ENCODE measurements at regions of chr10 and their contacts with region 1.

Region 1: DNA sequence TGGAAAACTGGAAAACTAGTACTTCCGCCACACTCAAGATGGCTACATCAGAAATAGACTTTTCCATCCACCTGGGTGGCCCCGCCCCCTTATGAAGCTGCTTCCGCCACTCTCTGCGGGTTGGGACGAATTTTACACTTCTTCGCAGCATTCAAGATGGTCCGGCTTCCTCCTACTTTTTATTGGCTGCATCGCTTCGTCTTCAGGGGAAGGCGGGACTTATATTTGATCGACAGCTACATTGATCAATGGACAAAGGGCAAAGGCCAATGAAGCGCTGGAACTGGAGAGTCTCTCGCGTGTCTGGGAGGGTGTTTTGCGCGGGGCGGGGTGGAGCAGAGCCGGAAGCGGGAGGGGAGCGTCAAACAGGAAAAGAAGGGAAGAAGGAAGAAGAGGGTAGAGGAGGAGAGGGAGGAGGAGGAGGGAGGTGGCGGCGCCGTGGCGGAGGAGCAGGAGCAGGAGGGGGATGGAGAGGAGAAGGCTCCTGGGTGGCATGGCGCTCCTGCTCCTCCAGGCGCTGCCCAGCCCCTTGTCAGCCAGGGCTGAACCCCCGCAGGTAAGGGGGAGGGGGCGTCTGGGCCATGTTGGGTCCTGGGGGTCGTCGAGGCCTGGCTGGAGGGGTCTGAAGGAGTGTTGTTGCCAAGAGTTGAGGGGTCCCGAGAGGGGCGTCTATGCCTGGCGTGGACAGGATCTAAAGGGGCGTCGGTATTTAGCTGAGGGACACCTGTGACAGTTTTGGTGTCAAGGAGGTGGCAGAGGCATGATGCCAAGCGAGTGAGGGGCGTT is at the start of gene WBP1L:
- DNase-seq: peak; percentile 98
- ATAC-seq: peak; percentile 95
- H3K4me3 ChIP-seq: peak within 1 kb of the TSS; percentile 70 to 96 (median 89)
- H3K4me3 Mint-ChIP-seq: peak within 1 kb of the TSS; percentile 89
- H3K27ac ChIP-seq: peak within 1 kb of the TSS; percentile 58 to 86
- H3K27ac Mint-ChIP-seq: peak within 1 kb of the TSS; percentile 88
- H3K4me1 ChIP-seq: peaks cover 24 to 25% of the 10 kb centered on the region in 2 donors
- H3K4me1 Mint-ChIP-seq: peaks cover 42% of the 10 kb centered on the region
- H3K27me3 ChIP-seq: peaks cover 0 to 2% (median 0%) of the 10 kb centered on the region in 4 experiments
- H3K27me3 Mint-ChIP-seq: no peaks in the 10 kb centered on the region
- CTCF ChIP-seq: peak; percentile 16
- total RNA-seq, gene WBP1L: 43.2 and 44.3 TPM in 2 replicates

Region 2: GRCh38 chr10:102721954-102722353 is 21.8 kb before region 1 on chr10:
- CTCF ChIA-PET with region 1: no interaction called
- POLR2A ChIA-PET with region 1: no interaction called
- intact Hi-C with region 1: no loop called
- DNase-seq: no peak
- ATAC-seq: no peak
- H3K4me3 ChIP-seq: no peak overlapping the region
- H3K4me3 Mint-ChIP-seq: no peak overlapping the region
- H3K27ac ChIP-seq: no peak overlapping the region
- H3K27ac Mint-ChIP-seq: no peak overlapping the region
- H3K4me1 ChIP-seq: no peaks in the 10 kb centered on the region
- H3K4me1 Mint-ChIP-seq: peaks cover 2% of the 10 kb centered on the region
- H3K27me3 ChIP-seq: no peaks in the 10 kb centered on the region
- H3K27me3 Mint-ChIP-seq: no peaks in the 10 kb centered on the region
- CTCF ChIP-seq: no peak

Region 3: GRCh38 chr10:102796407-102797176 is 52.8 kb after region 1 on chr10:
- CTCF ChIA-PET with region 1: no interaction called
- POLR2A ChIA-PET with region 1: no interaction called
- intact Hi-C with region 1: loop called (anchors 10 kb)
- DNase-seq: peak; percentile 57
- ATAC-seq: peak; percentile 99
- H3K4me3 ChIP-seq: peak overlapping the region in 3 of 5 experiments; percentile 14 to 44 (median 21)
- H3K4me3 Mint-ChIP-seq: peak overlapping the region; percentile 79
- H3K27ac ChIP-seq: peak overlapping the region; percentile 47 to 84
- H3K27ac Mint-ChIP-seq: peak overlapping the region; percentile 87
- H3K4me1 ChIP-seq: peaks cover 31 to 34% of the 10 kb centered on the region in 2 donors
- H3K4me1 Mint-ChIP-seq: peaks cover 54% of the 10 kb centered on the region
- H3K27me3 ChIP-seq: no peaks in the 10 kb centered on the region
- H3K27me3 Mint-ChIP-seq: no peaks in the 10 kb centered on the region
- CTCF ChIP-seq: no peak

Region 4: DNA sequence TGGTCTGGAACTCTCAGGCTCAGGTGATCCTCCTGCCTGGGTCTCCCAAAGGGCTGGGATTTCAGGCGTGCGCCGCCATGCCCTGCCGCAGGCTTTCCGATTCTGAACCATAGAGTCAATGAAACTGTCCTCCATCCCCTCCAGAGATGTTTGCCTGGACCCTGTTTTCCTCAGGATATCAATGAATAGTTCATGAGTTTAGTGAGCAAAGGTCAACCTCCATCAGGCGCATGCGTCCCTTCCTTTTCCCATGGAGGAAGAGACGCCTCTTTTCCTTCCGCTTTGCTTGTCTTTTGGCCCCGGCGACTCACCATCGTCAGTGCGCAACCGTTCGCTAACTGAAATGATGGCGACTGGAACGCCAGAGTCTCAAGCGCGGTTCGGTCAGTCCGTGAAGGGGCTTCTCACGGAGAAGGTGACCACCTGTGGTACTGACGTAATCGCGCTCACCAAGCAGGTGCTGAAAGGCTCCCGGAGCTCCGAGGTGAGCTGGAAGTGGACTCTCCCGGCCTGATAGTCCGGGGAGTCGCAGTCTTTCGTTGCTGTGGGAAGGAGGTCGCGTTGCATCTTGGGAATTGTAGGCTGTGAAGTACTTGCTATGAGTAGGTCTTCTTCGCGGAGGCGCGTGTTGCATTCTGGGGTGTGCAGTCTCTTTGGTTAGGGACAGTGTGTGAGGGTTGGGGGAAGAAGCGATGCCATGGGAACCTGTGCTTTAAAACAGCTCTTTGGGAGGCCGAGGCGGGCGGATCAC is 110.3 kb after region 1 on chr10 and contains the start of gene BORCS7:
- CTCF ChIA-PET with region 1: no interaction called
- POLR2A ChIA-PET with region 1: interaction called, 4 read pairs
- intact Hi-C with region 1: loop called (anchors 1 kb)
- DNase-seq: peak; percentile 93
- ATAC-seq: peak; percentile 99
- H3K4me3 ChIP-seq: peak within 1 kb of the TSS; percentile 86 to 99 (median 98)
- H3K4me3 Mint-ChIP-seq: peak within 1 kb of the TSS; percentile 83
- H3K27ac ChIP-seq: peak within 1 kb of the TSS; percentile 84 to 91
- H3K27ac Mint-ChIP-seq: peak within 1 kb of the TSS; percentile 97
- H3K4me1 ChIP-seq: peaks cover 0 to 8% of the 10 kb centered on the region in 2 donors
- H3K4me1 Mint-ChIP-seq: peaks cover 12% of the 10 kb centered on the region
- H3K27me3 ChIP-seq: no peaks in the 10 kb centered on the region
- H3K27me3 Mint-ChIP-seq: no peaks in the 10 kb centered on the region
- CTCF ChIP-seq: no peak
- total RNA-seq, gene BORCS7: 20.8 and 21.8 TPM in 2 replicates